T-cell (primary cell): ENCODE measurements at regions of chr7 and their contacts with region 1.

Region 1: DNA sequence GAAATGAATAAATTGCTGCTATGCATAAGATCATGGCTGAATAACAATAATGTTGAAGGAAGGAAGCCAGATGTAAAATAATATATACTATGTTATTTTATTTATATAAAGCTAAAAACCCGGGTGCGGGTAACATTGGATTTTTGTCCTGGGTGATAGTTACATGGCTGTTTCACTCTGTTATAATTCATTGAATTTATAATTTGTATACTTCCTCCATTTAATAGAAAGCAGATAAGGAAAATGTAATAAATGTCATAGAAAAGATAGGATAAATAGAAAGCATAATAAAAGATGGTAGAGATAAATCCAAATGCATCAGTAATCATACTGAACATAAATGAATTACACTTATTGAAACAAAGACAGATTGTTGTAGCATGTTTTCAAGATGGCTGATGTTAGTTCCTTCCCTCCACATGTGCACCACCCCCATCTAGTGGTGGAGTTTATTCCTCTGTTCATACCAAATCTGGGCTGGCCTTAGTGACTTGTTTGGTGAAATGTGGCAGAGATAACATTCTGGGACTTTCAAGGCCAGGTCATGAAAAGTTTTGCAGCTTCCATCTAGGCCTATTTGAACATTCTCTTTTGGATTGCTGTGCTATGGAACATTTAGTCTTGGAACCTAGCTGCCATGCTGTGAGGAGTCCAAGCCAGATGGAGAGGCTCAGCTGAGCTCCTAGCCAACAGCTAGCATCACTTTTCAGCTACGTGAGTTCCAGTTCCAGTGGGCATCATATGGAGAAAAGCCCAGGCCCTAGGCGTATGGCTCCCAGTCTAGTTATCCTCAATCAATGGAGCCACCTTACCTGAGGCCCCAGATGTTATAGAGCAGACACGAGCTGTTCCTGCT is 46.9 kb downstream of the AHCYL2 start:
- DNase-seq: peak in 34 of 35 experiments; percentile 16 to 86 (median 56)
- ATAC-seq: peak; percentile 91 to 99 (median 96)
- H3K4me3 ChIP-seq: no peak overlapping the region
- H3K4me3 Mint-ChIP-seq: peak overlapping the region; percentile 24 to 39 (median 26)
- H3K27ac ChIP-seq: no peak overlapping the region
- H3K27ac Mint-ChIP-seq: peak overlapping the region in 1 of 2 donors; percentile 6
- H3K4me1 ChIP-seq: no peaks in the 10 kb centered on the region
- H3K4me1 Mint-ChIP-seq: peaks cover 3 to 9% (median 8%) of the 10 kb centered on the region in 3 donors
- H3K27me3 ChIP-seq: no peaks in the 10 kb centered on the region
- H3K27me3 Mint-ChIP-seq: no peaks in the 10 kb centered on the region

Region 2: DNA sequence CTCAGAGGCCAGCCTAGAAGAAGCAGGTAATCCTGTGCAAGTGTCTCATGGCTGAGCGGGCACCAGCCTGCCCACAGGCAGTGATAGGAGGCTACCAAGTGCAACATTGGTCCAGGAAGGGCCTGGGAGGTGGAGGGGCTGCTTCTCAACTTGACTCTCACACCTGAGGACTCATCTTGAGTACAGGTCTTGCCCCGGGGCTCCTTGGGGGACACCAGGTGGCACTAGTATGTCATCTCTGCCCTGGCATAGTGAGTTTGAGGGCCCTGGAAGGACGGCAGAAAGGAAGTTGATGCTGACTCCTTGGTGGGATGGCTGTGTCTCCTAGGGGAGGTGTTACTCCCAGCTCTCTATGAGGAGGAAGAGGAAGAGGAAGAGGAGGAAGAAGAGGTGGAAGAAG is 477.7 kb before region 1 on chr7:
- CTCF ChIA-PET with region 1: no interaction called
- POLR2A ChIA-PET with region 1: no interaction called
- DNase-seq: peak in 10 of 35 experiments; percentile 6 to 44 (median 17)
- ATAC-seq: no peak
- H3K4me3 ChIP-seq: no peak overlapping the region
- H3K4me3 Mint-ChIP-seq: no peak overlapping the region
- H3K27ac ChIP-seq: no peak overlapping the region
- H3K27ac Mint-ChIP-seq: peak overlapping the region in 1 of 2 donors; percentile 57
- H3K4me1 ChIP-seq: peaks cover 0 to 22% of the 10 kb centered on the region in 2 experiments
- H3K4me1 Mint-ChIP-seq: peaks cover 16 to 18% (median 17%) of the 10 kb centered on the region in 3 donors
- H3K27me3 ChIP-seq: no peaks in the 10 kb centered on the region
- H3K27me3 Mint-ChIP-seq: no peaks in the 10 kb centered on the region

Region 3: GRCh38 chr7:129218514-129219062 is 53.1 kb before region 1 on chr7:
- CTCF ChIA-PET with region 1: interaction called, 43 to 67 read pairs
- POLR2A ChIA-PET with region 1: no interaction called
- DNase-seq: peak; percentile 33 to 89 (median 69)
- ATAC-seq: peak; percentile 84 to 88 (median 85)
- H3K4me3 ChIP-seq: no peak overlapping the region
- H3K4me3 Mint-ChIP-seq: no peak overlapping the region
- H3K27ac ChIP-seq: no peak overlapping the region
- H3K27ac Mint-ChIP-seq: no peak overlapping the region
- H3K4me1 ChIP-seq: peaks cover 8 to 12% of the 10 kb centered on the region in 2 experiments
- H3K4me1 Mint-ChIP-seq: peaks cover 14 to 18% (median 14%) of the 10 kb centered on the region in 3 donors
- H3K27me3 ChIP-seq: peaks cover 0 to 3% of the 10 kb centered on the region in 2 experiments
- H3K27me3 Mint-ChIP-seq: peaks cover 0 to 2% of the 10 kb centered on the region in 2 donors